ENCODE measurements at regions of chr10 and their contacts with region 1.

Region 1: GRCh38 chr10:34528320-34528719 is 286.8 kb downstream of the PARD3 start:
- DNase-seq: no peak
- ATAC-seq: peak; percentile 67
- H3K4me3 ChIP-seq: no peak overlapping the region
- H3K27ac ChIP-seq: no peak overlapping the region
- H3K4me1 ChIP-seq: peaks cover 7% of the 10 kb centered on the region; the same call in 1 of the 2 replicates
- H3K27me3 ChIP-seq: no peaks in the 10 kb centered on the region
- CTCF ChIP-seq: no peak
- EP300 ChIP-seq: no peak
- POLR2A ChIP-seq: no peak
- RAD21 ChIP-seq: no peak

Region 2: GRCh38 chr10:34538281-34538829 is 10.0 kb after region 1 on chr10:
- CTCF ChIA-PET with region 1: interaction called, 8 read pairs
- POLR2A ChIA-PET with region 1: interaction called, 5 read pairs
- RAD21 ChIA-PET with region 1: interaction called, 10 read pairs
- SMC1A ChIA-PET with region 1: interaction called, 25 read pairs
- in situ Hi-C with region 1: no loop called
- intact Hi-C with region 1: no loop called
- DNase-seq: peak; percentile 57
- ATAC-seq: peak; percentile 77
- H3K4me3 ChIP-seq: peak overlapping the region; percentile 31; the same call in 1 of the 2 replicates
- H3K27ac ChIP-seq: peak overlapping the region; percentile 39
- H3K4me1 ChIP-seq: peaks cover 18% of the 10 kb centered on the region
- H3K27me3 ChIP-seq: no peaks in the 10 kb centered on the region
- CTCF ChIP-seq: no peak
- EP300 ChIP-seq: no peak
- POLR2A ChIP-seq: no peak
- RAD21 ChIP-seq: no peak

Region 3: GRCh38 chr10:34574353-34574934 is 46.1 kb after region 1 on chr10:
- CTCF ChIA-PET with region 1: interaction called, 11 read pairs
- POLR2A ChIA-PET with region 1: no interaction called
- RAD21 ChIA-PET with region 1: interaction called, 5 read pairs
- SMC1A ChIA-PET with region 1: interaction called, 7 read pairs
- in situ Hi-C with region 1: no loop called
- intact Hi-C with region 1: loop called (anchors 5 kb)
- DNase-seq: no peak
- ATAC-seq: no peak
- H3K4me3 ChIP-seq: no peak overlapping the region
- H3K27ac ChIP-seq: no peak overlapping the region
- H3K4me1 ChIP-seq: no peaks in the 10 kb centered on the region
- H3K27me3 ChIP-seq: no peaks in the 10 kb centered on the region
- CTCF ChIP-seq: no peak
- EP300 ChIP-seq: no peak
- POLR2A ChIP-seq: no peak
- RAD21 ChIP-seq: no peak

Measured in GM12878 (cell line).